CD4-positive, alpha-beta memory T cell (primary cell): ENCODE measurements at regions of chr21 and their contacts with region 1.

Region 1: DNA sequence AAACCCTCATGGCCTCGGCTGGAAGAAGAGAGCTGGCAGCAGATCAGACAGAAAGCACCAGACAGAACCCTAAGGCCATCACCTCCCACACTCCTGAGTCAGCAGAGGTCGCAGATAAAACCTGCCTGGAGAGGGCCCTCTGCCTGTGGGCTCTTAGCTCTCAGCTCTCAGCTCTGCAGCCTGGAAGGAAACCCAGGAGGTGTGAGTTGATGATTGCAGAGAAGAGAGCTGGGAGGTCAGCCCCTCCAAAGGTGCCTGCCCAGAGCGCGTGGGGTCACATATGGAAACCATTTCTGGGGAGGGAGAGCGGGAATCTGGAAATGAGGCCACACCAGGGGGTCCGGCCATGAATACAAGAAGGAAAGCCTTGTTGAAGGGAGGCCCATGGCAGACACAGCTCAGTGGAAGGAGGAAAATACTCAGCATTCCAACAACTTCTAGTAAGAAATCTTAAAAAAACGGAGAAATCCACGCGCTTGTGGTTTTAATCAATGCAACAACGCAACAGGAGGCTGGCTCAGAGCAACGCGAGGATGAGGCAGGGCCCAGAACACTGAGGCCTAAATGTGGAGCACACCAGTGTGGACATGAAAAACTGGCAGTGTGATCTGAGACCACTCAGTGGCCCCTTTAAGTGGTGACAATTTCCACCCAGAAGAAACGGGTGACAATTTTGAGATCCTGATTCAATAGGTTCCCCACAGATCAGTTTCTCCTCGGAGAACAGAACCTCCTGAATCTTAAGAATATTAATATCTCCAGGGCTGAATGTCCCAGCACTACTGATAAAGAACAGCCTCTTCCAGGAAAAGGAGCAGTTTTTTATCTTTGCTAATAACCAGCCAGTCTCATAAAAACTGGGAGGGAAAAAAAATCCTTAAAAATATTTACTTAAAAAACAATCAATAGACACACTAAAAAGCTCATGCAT is 45.7 kb downstream of the PSMG1 start:
- DNase-seq: no peak
- H3K4me3 ChIP-seq: no peak overlapping the region
- H3K4me3 Mint-ChIP-seq: no peak overlapping the region
- H3K27ac ChIP-seq: no peak overlapping the region
- H3K27ac Mint-ChIP-seq: no peak overlapping the region
- H3K4me1 ChIP-seq: no peaks in the 10 kb centered on the region
- H3K4me1 Mint-ChIP-seq: no peaks in the 10 kb centered on the region
- H3K27me3 ChIP-seq: no peaks in the 10 kb centered on the region
- H3K27me3 Mint-ChIP-seq: peaks cover 2 to 9% of the 10 kb centered on the region in 2 donors

Region 2: GRCh38 chr21:38159355-38159754 is 978.2 kb before region 1 on chr21:
- CTCF ChIA-PET with region 1: no interaction called
- POLR2A ChIA-PET with region 1: no interaction called
- intact Hi-C with region 1: loop called (anchors 5 kb)
- DNase-seq: peak; percentile 6 to 46 (median 38)
- H3K4me3 ChIP-seq: no peak overlapping the region
- H3K4me3 Mint-ChIP-seq: peak overlapping the region in 1 of 8 donors; percentile 12
- H3K27ac ChIP-seq: no peak overlapping the region
- H3K27ac Mint-ChIP-seq: no peak overlapping the region
- H3K4me1 ChIP-seq: no peaks in the 10 kb centered on the region
- H3K4me1 Mint-ChIP-seq: no peaks in the 10 kb centered on the region
- H3K27me3 ChIP-seq: no peaks in the 10 kb centered on the region
- H3K27me3 Mint-ChIP-seq: peaks cover 5 to 8% of the 10 kb centered on the region in 2 donors

Region 3: GRCh38 chr21:38505654-38506515 is 631.6 kb before region 1 on chr21:
- CTCF ChIA-PET with region 1: no interaction called
- POLR2A ChIA-PET with region 1: no interaction called
- intact Hi-C with region 1: loop called (anchors 5 kb)
- DNase-seq: peak in 2 of 5 donors; percentile 1 to 3
- H3K4me3 ChIP-seq: no peak overlapping the region
- H3K4me3 Mint-ChIP-seq: no peak overlapping the region
- H3K27ac ChIP-seq: no peak overlapping the region
- H3K27ac Mint-ChIP-seq: no peak overlapping the region
- H3K4me1 ChIP-seq: no peaks in the 10 kb centered on the region
- H3K4me1 Mint-ChIP-seq: peaks cover 3 to 7% (median 3%) of the 10 kb centered on the region in 4 donors
- H3K27me3 ChIP-seq: peaks cover 6% of the 10 kb centered on the region
- H3K27me3 Mint-ChIP-seq: peaks cover 14 to 27% of the 10 kb centered on the region in 2 donors